CD8-positive, alpha-beta T cell (primary cell): ENCODE measurements at regions of chr3 and their contacts with region 1.

Region 1: DNA sequence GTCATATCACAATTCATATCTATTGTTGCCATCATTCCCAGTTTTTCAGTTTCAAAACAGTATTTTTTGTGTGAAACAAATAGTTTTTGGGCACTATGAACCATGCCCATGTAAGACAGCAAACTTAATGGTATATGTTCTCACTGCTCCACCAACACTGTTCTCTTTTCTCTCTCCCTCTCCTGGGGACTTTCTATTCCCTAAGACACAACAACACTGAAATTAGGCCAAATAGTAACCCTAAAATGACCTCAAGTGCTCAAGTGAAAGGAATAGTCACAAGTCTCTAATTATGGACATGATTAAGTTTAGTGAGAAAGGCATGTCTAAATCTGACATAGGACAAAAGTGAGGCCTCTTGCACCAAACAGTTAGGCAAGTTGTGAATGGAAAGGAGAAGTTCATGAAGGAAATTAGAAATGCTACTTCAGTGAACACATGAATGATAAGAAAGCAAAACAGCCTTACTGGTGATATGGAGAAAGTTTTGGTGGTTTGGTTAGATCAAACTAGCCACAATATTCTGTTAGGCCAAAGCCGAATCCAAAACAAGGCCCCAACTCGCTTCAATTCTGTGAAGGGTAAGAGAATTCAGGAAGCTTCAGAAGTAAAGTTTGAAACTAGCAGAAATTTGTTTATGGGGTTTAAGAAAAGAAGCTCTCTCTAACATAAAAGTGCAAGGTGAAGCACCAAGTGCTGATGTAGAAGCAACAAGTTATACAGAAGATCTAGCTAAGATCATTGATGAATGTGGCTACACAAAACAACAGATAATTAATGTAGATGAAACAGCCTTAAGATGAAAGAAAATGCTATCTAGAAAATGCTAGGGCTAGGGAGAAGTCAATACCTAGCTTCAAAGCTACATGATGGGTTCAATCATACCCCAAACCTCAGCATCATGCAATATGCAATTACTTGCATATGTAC is 104.2 kb downstream of the CBLB start:
- DNase-seq: peak in 2 of 9 experiments; percentile 44 to 63
- ATAC-seq: peak; percentile 52
- H3K4me3 ChIP-seq: no peak overlapping the region
- H3K4me3 Mint-ChIP-seq: peak overlapping the region; percentile 8
- H3K27ac ChIP-seq: peak overlapping the region in 1 of 2 experiments; percentile 67
- H3K27ac Mint-ChIP-seq: peak overlapping the region; percentile 83
- H3K4me1 ChIP-seq: peaks cover 50% of the 10 kb centered on the region
- H3K4me1 Mint-ChIP-seq: peaks cover 79% of the 10 kb centered on the region
- H3K27me3 ChIP-seq: no peaks in the 10 kb centered on the region
- H3K27me3 Mint-ChIP-seq: no peaks in the 10 kb centered on the region
- CTCF ChIP-seq: no peak

Region 2: DNA sequence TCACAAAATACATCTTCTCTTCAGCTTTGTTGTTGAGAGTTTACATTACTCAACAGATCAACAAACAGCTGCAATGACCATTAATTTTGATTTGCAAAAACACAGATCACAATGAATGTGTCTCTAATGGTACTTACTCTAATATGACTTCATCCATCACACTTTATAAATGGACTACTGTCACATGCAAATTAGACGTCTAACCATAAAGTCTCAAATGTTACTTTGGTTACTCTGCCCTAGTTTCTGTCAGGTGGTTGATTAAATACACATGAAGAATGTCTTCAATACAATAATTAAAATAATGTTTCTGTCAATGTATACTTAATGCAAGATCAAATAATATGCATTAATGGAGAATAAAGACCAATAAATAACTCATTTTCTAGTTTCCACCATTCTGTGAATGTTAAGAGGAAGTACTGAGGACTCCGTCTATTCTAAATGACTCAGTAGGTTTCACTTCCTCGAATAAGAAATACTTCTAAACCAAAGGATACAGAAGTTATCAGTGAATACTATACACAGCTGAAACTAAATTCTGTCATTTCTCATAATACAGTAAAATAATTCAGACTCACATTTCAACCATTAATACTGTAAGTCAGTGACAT is 41.6 kb before region 1 on chr3:
- CTCF ChIA-PET with region 1: no interaction called
- POLR2A ChIA-PET with region 1: no interaction called
- intact Hi-C with region 1: loop called in 1 of 2 experiments (anchors 5 kb)
- DNase-seq: peak in 1 of 9 experiments; percentile 44
- ATAC-seq: no peak
- H3K4me3 ChIP-seq: no peak overlapping the region
- H3K4me3 Mint-ChIP-seq: peak overlapping the region; percentile 22
- H3K27ac ChIP-seq: peak overlapping the region in 1 of 2 experiments; percentile 5
- H3K27ac Mint-ChIP-seq: peak overlapping the region; percentile 53
- H3K4me1 ChIP-seq: peaks cover 9% of the 10 kb centered on the region
- H3K4me1 Mint-ChIP-seq: peaks cover 29% of the 10 kb centered on the region
- H3K27me3 ChIP-seq: no peaks in the 10 kb centered on the region
- H3K27me3 Mint-ChIP-seq: no peaks in the 10 kb centered on the region
- CTCF ChIP-seq: no peak

Region 3: DNA sequence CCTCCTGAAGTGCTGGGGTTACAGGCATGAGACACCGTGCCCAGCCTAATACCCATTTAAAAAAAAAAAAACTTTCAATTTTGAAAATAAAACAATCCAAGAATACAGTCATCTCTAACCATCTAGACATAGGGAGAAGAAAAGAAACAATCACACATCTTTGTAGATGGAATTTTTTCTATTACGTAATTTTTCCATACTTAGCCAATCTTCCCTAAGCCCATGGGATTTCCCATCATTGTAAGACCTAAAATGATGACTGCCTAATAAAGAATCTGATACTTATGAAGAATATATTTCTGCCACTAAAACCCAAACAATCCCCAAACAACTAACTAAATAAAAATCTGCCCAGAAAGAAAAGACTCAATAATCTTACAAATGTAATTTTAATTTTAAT is 15.5 kb after region 1 on chr3:
- CTCF ChIA-PET with region 1: no interaction called
- POLR2A ChIA-PET with region 1: interaction called, 3 read pairs
- intact Hi-C with region 1: loop called (anchors 2 kb)
- DNase-seq: no peak
- ATAC-seq: no peak
- H3K4me3 ChIP-seq: no peak overlapping the region
- H3K4me3 Mint-ChIP-seq: no peak overlapping the region
- H3K27ac ChIP-seq: no peak overlapping the region
- H3K27ac Mint-ChIP-seq: peak overlapping the region; percentile 53
- H3K4me1 ChIP-seq: peaks cover 36% of the 10 kb centered on the region
- H3K4me1 Mint-ChIP-seq: peaks cover 69% of the 10 kb centered on the region
- H3K27me3 ChIP-seq: no peaks in the 10 kb centered on the region
- H3K27me3 Mint-ChIP-seq: no peaks in the 10 kb centered on the region
- CTCF ChIP-seq: no peak